Activated CD8-positive, alpha-beta T cell treated with anti-CD3 and anti-CD28 coated beads, Interleukin-2, amount 10 ng/mL, durations not matched to agents 7 days and 5 days (primary cell): ENCODE measurements at regions of chr17 and their contacts with region 1.

Region 1: DNA sequence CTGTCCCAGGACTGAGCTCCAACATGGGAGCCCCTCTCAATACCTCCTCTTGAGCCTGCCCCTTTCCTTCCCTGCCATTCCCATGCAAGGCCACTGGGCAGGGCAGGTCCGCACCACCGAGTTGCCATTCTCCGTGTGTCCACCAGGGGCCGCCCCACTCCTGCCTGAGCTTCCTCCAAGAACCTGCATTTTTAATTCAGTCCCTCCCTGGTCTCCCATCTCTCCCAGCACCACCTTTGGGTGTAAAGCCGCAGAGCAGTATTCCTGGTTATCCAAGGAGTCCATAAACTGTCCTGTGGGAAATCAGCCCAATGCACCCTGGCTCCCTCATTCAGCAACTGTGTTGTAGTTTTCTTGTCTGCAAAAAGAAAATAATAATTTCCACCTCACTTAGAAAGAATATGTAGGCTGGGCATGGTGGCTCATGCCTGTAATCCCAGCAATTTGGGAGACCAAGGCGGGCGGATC is 15.9 kb upstream of the ANKRD40CL start:
- DNase-seq: peak; percentile 85
- ATAC-seq: peak; percentile 67
- H3K4me3 Mint-ChIP-seq: no peak overlapping the region
- H3K27ac Mint-ChIP-seq: no peak overlapping the region
- H3K4me1 Mint-ChIP-seq: peaks cover 32% of the 10 kb centered on the region
- H3K27me3 Mint-ChIP-seq: peaks cover 38% of the 10 kb centered on the region

Region 2: DNA sequence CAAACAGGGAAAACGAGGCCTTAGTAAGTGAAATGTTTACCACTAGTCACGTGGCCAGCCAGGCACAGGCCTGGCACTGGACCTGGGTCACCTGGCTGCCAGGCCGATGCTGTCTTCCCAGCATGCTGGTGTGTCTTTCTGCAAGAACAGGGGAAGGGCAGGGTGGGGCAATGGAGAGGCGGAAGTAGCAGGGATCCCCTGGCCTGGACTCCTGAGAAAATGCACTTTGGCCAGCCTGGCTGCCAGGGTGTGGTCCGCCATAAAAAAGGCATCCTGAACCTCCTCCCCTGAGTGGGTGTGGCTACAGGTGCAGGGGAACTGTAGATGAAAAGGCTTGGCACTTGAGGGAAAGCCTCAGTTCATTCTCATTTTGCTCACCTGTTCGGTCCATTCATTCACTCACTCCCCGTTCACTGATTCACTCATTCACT is 14.9 kb before region 1 on chr17:
- CTCF ChIA-PET with region 1: interaction called, 27 read pairs
- POLR2A ChIA-PET with region 1: no interaction called
- DNase-seq: no peak
- ATAC-seq: no peak
- H3K4me3 Mint-ChIP-seq: no peak overlapping the region
- H3K27ac Mint-ChIP-seq: no peak overlapping the region
- H3K4me1 Mint-ChIP-seq: peaks cover 7% of the 10 kb centered on the region
- H3K27me3 Mint-ChIP-seq: peaks cover 29% of the 10 kb centered on the region

Region 3: DNA sequence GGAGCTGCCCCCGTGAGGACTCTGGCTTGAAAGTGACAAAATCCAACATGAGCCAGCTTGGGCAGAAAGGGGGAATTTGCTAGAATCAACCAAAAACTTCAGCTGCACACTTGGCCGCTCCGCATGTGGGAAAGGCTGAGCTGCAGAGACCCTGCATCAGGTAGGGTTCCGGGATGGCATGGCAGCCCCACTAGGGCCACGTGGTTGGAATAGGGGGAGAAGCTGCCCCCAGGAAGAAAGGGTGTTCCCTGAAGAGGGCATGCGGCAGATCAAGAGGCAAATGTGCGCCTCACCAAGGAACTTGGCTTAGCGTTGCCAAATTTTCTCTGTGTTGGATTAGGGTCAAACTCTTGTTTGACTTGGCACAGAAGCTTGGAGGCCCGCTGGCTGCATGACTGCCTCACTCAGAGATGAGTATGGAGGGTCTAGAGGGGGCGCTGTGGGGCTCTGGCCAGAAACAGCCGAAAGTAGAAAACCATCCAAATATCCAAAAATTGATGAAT is 23.0 kb after region 1 on chr17:
- CTCF ChIA-PET with region 1: interaction called, 19 read pairs
- POLR2A ChIA-PET with region 1: no interaction called
- DNase-seq: no peak
- ATAC-seq: no peak
- H3K4me3 Mint-ChIP-seq: no peak overlapping the region
- H3K27ac Mint-ChIP-seq: no peak overlapping the region
- H3K4me1 Mint-ChIP-seq: no peaks in the 10 kb centered on the region
- H3K27me3 Mint-ChIP-seq: peaks cover 6% of the 10 kb centered on the region

Region 4: DNA sequence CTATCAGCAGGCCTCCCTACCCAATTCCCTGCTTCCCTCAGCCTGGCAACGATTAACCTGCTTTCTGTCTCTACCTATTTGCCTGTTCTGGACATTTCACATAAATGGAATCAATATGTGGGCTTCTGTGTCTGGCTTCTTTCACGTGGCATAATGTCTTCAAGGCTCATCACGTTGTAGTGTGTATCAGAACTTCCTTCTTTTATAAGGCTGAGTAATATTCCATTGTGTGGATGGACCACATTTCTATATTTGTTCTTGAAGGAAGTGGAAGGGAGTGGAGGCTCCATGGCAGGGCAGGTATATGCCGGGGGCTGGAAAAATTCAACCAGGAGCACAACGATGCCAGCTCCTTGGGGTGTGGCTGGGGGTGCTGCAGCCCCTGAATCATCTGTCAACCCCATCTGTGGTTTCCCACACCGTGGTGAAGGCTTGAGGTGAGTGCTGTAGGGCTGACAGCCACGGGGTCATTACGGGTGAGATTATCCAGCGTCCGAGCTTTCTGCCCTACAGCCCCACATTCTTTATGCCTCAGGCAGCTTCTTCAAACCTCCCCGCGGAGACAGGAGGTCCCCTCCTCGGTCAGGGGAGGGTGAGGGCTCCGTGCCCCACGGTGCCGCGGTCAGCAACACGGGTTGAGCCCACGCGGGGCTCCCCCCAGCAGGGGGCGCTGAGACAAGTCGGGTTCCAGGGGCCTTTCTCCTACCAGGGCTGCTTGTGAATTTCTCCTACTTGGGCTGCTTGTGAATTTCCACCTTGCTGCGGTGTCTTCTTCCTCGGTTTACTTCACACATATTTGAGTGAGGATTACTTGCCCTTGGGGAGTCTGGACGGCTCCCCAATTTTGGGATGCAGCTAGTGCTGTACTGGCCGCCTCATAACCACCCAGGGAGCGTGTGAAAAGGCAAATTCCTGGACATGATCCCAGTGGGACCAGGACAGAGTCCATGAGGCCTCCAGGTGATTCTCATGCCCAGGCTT is 33.8 kb after region 1 on chr17:
- CTCF ChIA-PET with region 1: interaction called, 24 read pairs
- POLR2A ChIA-PET with region 1: no interaction called
- DNase-seq: peak; percentile 58
- ATAC-seq: peak; percentile 82
- H3K4me3 Mint-ChIP-seq: no peak overlapping the region
- H3K27ac Mint-ChIP-seq: no peak overlapping the region
- H3K4me1 Mint-ChIP-seq: peaks cover 29% of the 10 kb centered on the region
- H3K27me3 Mint-ChIP-seq: peaks cover 25% of the 10 kb centered on the region

Region 5: GRCh38 chr17:50841949-50842354 is 58.7 kb after region 1 on chr17:
- CTCF ChIA-PET with region 1: interaction called, 27 read pairs
- POLR2A ChIA-PET with region 1: no interaction called
- DNase-seq: peak; percentile 70
- ATAC-seq: peak; percentile 70
- H3K4me3 Mint-ChIP-seq: no peak overlapping the region
- H3K27ac Mint-ChIP-seq: no peak overlapping the region
- H3K4me1 Mint-ChIP-seq: no peaks in the 10 kb centered on the region
- H3K27me3 Mint-ChIP-seq: no peaks in the 10 kb centered on the region

Region 6: DNA sequence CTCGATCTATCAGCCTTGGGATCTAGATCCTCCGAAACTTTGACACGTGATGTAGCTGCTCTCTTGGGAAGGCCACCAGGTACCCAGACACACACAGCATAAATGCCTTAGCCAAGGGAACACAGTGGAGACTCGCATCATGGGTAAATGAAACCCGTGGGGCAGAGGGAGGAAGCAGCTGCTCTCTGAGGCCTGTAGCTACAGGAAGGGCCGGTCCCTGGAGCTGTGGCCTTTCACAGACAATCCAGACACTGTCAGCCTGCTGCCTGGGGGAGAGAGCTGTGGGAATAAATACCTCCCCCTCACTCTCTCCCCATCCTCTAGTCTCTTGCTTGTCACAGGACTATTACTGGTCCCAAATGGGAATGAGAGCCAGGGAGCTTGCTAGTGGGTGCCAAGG is 828.4 kb after region 1 on chr17:
- CTCF ChIA-PET with region 1: no interaction called
- POLR2A ChIA-PET with region 1: no interaction called
- DNase-seq: no peak
- ATAC-seq: no peak
- H3K4me3 Mint-ChIP-seq: no peak overlapping the region
- H3K27ac Mint-ChIP-seq: no peak overlapping the region
- H3K4me1 Mint-ChIP-seq: no peaks in the 10 kb centered on the region
- H3K27me3 Mint-ChIP-seq: peaks cover 2% of the 10 kb centered on the region